Activated B cell treated with CpG ODN at 0.5 μM for 24 hours (primary cell): ENCODE measurements at regions of chr22 and their contacts with region 1.

Region 1: DNA sequence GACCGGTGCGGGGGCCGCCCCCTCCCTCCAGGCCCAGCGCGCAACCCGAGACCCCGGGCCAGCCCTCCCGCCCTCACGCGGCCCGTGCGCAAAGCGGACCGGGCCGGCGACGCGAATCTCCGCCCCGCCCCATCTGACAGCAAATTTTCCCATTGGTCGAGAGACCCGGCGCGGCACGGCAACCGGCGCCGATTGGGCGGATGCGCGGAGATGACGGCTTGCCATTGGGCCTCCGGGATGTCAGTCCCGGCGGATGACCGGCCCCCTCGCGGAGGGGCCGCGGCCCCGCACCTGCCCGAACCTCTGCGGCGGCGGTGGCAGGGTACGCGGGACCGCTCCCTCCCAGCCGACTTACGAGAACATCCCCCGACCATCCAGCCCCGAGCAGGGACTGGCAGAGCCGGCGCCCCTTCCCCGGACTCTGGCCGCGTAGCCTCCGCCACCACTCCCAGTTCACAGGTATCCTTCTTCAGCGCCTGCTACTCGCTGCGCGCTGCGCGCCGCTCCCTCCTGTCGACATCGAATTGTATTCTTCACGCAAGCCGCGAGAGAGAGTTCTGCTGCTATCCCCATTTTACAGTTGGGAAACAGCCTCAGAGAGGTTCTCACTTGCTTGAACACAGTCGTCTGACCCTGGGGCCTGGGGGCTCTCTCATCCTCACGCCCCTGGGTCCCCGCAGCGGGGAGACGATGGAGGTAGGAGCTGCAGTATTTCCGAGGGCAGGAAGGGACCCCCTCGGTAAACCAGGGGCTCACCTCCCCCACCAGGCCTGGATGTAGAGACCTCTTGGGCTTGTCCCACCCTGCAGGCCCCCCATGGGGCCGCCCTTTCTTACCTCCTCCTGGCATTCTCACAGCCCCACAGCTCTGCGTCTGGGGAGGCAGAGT is at the start of gene ARVCF:
- DNase-seq: peak; percentile 94
- ATAC-seq: peak; percentile 67
- H3K4me3 Mint-ChIP-seq: peak within 1 kb of the TSS; percentile 87
- H3K27ac Mint-ChIP-seq: peak within 1 kb of the TSS; percentile 53
- H3K4me1 Mint-ChIP-seq: peaks cover 21% of the 10 kb centered on the region
- H3K27me3 Mint-ChIP-seq: no peaks in the 10 kb centered on the region
- CTCF ChIP-seq: no peak
- total RNA-seq, gene ARVCF: 2.3 and 6.5 TPM in 2 replicates

Region 2: DNA sequence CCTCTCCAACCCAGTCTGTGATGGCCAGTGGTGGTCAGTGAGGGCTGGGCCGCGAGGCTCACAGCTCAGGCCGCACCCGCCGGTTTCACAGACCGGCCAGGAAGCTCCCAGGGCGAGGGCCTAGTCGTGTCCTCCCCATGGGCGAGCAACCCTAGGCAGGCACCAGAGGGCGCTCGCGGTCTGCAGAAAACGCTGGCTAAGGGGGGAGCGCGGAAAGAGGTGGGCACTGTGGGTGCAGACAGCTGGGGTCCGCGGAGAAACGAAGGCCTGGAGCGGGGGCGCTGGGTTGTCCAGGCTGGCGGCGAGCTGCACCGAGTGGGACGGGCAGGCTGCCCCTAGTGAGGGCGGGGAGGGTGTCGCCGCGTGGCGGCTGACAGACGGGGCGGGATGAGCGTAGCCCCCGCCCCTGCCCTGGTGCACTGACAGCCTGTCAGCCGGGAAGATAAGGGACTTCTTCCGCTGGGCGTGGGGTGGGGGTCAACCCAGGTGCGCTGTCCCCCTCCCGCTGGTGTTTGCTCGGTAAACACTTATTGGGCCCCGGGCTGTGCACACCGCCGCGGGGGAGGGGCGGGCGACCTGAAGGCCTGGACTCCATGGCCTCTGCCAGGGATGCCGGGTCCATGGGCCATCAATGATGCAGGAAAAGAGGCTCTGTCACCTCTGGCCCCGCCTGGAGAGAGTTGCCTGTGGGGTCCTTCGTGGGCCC is 286.2 kb before region 1 on chr22:
- CTCF ChIA-PET with region 1: interaction called, 7 read pairs
- POLR2A ChIA-PET with region 1: no interaction called
- intact Hi-C with region 1: loop called (anchors 2 kb)
- DNase-seq: peak; percentile 88
- ATAC-seq: peak; percentile 94
- H3K4me3 Mint-ChIP-seq: peak overlapping the region; percentile 74
- H3K27ac Mint-ChIP-seq: no peak overlapping the region
- H3K4me1 Mint-ChIP-seq: peaks cover 3% of the 10 kb centered on the region
- H3K27me3 Mint-ChIP-seq: peaks cover 2% of the 10 kb centered on the region
- CTCF ChIP-seq: peak; percentile 71

Region 3: DNA sequence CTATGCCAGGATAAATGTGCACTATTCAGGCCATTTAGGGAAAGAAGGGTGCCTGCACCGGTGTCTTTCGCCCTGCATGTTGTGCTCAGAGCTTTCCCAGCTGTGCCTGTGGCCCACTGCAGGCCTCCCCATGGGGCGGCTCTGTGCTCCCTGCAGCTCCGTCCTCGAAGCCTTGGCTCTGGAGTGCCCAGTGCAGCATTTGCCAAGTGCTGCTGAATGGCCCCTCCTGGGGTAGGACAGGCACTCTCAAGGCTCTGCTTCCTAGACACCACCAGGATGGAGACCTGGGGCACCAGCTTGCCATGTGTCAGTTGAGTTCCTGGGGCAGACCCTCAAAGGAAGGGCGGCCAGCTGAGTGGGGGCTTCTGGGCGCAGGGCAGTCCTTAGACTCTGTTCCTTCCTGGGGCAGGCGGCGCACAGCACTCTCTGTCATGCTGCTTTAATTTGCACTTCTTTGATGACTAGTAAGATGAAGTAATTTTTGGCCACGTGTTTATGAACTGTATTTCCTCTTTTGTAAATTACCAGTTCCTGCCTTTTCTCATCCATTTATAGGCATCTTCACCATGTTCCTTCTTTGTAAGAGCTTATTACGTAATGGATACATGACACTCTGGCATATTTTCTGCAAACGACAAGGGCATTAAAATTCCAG is 130.2 kb before region 1 on chr22:
- CTCF ChIA-PET with region 1: no interaction called
- POLR2A ChIA-PET with region 1: no interaction called
- intact Hi-C with region 1: no loop called
- DNase-seq: no peak
- ATAC-seq: peak; percentile 64
- H3K4me3 Mint-ChIP-seq: no peak overlapping the region
- H3K27ac Mint-ChIP-seq: peak overlapping the region; percentile 52
- H3K4me1 Mint-ChIP-seq: peaks cover 32% of the 10 kb centered on the region
- H3K27me3 Mint-ChIP-seq: no peaks in the 10 kb centered on the region
- CTCF ChIP-seq: no peak

Region 4: DNA sequence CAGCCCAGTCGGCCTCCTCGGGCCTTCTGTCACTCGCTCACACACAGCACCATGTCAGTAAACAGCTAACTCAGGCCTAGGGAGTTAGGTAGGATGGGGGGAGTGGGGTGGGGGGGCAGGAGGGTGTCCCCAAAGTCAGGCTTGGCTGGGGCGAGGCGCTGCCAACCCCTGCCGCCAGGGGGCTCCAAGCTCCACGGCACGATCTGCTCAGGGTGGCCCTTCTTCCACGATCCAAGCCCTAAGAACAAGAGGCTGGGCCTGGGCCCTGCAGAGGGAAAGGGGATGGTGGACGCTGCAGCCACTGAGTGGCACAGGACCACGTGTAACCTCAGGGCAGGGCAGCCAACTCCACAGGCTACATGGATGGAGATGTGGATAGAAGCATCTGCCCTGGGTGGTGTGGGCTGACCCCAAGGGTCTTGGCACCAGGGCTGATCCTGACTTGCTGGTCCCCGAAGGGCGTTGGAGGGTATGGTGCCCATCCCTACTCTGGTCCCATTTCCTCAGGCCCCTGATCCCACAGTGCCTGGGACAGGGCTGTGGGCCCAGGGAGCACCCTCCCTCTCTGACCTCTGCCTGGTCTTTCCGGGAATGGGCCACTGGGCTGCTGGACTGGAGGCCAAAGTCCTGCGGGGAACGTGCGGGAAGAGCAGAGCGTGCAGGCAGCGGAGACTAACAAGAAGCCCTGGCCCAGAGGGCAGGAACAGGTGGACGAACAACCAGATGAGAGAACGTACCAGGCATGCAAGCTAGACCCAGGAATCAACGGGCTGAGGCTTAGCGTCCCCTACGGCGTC is 46.3 kb before region 1 on chr22:
- CTCF ChIA-PET with region 1: interaction called, 33 read pairs
- POLR2A ChIA-PET with region 1: interaction called, 5 read pairs
- intact Hi-C with region 1: loop called (anchors 1 kb)
- DNase-seq: peak; percentile 74
- ATAC-seq: peak; percentile 87
- H3K4me3 Mint-ChIP-seq: no peak overlapping the region
- H3K27ac Mint-ChIP-seq: no peak overlapping the region
- H3K4me1 Mint-ChIP-seq: peaks cover 9% of the 10 kb centered on the region
- H3K27me3 Mint-ChIP-seq: no peaks in the 10 kb centered on the region
- CTCF ChIP-seq: peak; percentile 43

Region 5: GRCh38 chr22:20027966-20028854 is 11.2 kb after region 1 on chr22:
- CTCF ChIA-PET with region 1: no interaction called
- POLR2A ChIA-PET with region 1: interaction called, 59 read pairs
- intact Hi-C with region 1: loop called (anchors 2 kb)
- DNase-seq: no peak
- ATAC-seq: no peak
- H3K4me3 Mint-ChIP-seq: no peak overlapping the region
- H3K27ac Mint-ChIP-seq: no peak overlapping the region
- H3K4me1 Mint-ChIP-seq: peaks cover 54% of the 10 kb centered on the region
- H3K27me3 Mint-ChIP-seq: no peaks in the 10 kb centered on the region
- CTCF ChIP-seq: no peak

Region 6: DNA sequence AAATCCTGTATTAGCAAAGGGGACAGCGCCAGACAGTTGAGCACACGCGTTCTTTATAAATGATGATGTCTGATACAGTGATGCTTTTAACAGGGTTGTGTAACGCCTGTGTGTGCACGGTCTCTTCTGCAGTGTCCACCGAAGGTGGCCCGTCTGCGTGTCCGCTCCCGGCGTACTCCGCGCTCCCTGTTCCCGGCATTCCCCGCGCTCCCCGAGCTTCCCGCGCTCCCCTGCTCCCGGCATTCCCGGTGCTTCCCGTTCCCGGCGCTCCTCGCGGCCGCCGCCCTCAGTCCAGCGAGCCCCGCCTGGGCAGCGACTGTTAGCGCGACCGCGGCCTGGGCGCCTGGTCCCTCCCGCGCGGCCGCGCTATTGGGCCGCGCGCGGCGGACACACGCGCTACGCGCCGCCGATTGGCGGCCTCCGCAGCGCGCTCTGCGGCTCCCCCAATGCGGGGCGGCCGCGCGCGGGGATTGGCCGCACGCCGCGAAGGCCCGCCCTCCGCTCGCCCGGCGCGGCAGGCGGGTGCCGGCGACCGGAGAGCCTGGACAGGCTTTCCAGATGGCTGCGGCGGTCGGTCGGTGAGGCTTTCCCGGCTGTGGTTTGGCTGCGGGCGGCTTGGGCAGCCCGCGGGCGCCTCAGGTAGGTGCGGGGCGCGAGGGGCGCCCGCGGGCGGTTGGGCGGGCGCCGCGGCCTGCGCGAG is 62.9 kb after region 1 on chr22 and contains the start of gene DGCR8:
- CTCF ChIA-PET with region 1: no interaction called
- POLR2A ChIA-PET with region 1: interaction called, 3 read pairs
- intact Hi-C with region 1: loop called (anchors 2 kb)
- DNase-seq: peak; percentile 83
- ATAC-seq: peak; percentile 97
- H3K4me3 Mint-ChIP-seq: peak within 1 kb of the TSS; percentile 90
- H3K27ac Mint-ChIP-seq: peak within 1 kb of the TSS; percentile 80
- H3K4me1 Mint-ChIP-seq: peaks cover 32% of the 10 kb centered on the region
- H3K27me3 Mint-ChIP-seq: no peaks in the 10 kb centered on the region
- CTCF ChIP-seq: no peak
- total RNA-seq, gene DGCR8: 34.6 and 35.5 TPM in 2 replicates